OCI-LY7 (cell line): ENCODE measurements at regions of chr7 and their contacts with region 1.

Region 1: GRCh38 chr7:28695300-28696295 is 262.5 kb downstream of the TRIL start:
- DNase-seq: no peak
- H3K4me3 ChIP-seq: no peak overlapping the region
- H3K27ac ChIP-seq: no peak overlapping the region
- H3K4me1 ChIP-seq: no peaks in the 10 kb centered on the region
- CTCF ChIP-seq: no peak

Region 2: DNA sequence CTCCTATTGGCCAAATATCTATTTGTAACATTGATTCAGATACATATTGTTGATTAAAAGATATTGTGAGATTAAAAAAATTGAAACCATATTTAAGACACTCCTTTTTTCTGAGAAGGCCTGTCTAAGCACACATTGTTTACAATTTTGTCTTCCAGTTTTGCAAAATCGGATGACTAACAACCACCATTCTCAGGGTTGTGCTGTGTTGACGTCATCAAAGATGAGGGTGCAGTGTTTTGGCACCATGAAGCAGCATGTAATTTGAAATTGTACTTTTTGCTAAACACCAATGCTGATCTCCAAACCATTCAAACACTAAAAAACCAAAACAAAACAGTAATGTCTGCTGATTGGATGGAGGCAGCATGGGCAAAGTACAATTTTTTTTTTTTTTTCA is 275.9 kb before region 1 on chr7:
- CTCF ChIA-PET with region 1: no interaction called
- POLR2A ChIA-PET with region 1: no interaction called
- intact Hi-C with region 1: no loop called
- DNase-seq: no peak
- H3K4me3 ChIP-seq: no peak overlapping the region
- H3K27ac ChIP-seq: no peak overlapping the region
- H3K4me1 ChIP-seq: no peaks in the 10 kb centered on the region
- CTCF ChIP-seq: no peak

Region 3: DNA sequence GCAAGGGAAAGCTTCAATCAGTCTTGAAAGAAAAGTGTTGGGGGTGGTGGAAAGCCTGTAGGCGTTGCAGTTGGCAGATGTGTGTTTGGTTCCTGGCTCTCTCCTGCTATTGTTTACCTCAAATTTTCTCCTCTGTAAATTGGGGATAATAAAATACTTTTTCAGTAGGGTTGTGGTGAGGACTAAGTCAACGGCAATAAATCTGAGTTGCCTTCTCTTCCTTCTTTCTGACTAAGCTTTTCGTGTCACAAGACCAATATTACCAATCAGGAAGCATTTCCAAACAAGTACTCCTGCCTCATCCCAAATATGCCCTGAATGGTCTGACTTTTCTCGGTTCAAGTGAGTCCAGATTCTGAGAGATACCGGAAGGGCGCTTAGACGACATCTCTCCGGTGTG is 229.3 kb before region 1 on chr7:
- CTCF ChIA-PET with region 1: no interaction called
- POLR2A ChIA-PET with region 1: no interaction called
- intact Hi-C with region 1: no loop called
- DNase-seq: no peak
- H3K4me3 ChIP-seq: no peak overlapping the region
- H3K27ac ChIP-seq: no peak overlapping the region
- H3K4me1 ChIP-seq: no peaks in the 10 kb centered on the region
- CTCF ChIP-seq: no peak

Region 4: GRCh38 chr7:28608731-28609130 is 86.9 kb before region 1 on chr7:
- CTCF ChIA-PET with region 1: no interaction called
- POLR2A ChIA-PET with region 1: no interaction called
- intact Hi-C with region 1: no loop called
- DNase-seq: no peak
- H3K4me3 ChIP-seq: no peak overlapping the region
- H3K27ac ChIP-seq: no peak overlapping the region
- H3K4me1 ChIP-seq: no peaks in the 10 kb centered on the region
- CTCF ChIP-seq: no peak

Region 5: GRCh38 chr7:28684650-28685241 is 10.9 kb before region 1 on chr7:
- CTCF ChIA-PET with region 1: interaction called, 4 read pairs
- POLR2A ChIA-PET with region 1: interaction called, 12 read pairs
- intact Hi-C with region 1: no loop called
- DNase-seq: no peak
- H3K4me3 ChIP-seq: no peak overlapping the region
- H3K27ac ChIP-seq: no peak overlapping the region
- H3K4me1 ChIP-seq: peaks cover 12% of the 10 kb centered on the region
- CTCF ChIP-seq: no peak

Region 6: DNA sequence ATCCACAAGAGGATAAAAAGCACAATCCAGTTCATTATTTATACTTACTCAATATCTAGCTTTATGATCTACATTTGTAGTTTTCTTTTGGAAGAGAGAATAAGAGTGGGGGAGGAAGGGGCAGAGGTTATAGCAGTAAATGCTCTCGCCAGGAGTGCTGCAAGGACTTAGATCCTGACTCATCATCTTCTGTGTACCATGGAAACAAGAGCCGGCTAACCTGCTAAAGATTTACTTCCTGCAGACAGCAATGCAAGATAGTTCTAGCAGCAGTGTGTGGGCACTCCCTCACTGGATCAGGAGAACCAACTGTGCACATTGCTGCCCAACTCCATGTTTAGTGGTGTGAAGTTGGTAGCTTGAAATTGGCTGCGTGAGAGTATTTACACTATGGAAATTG is 310.2 kb after region 1 on chr7:
- CTCF ChIA-PET with region 1: no interaction called
- POLR2A ChIA-PET with region 1: no interaction called
- intact Hi-C with region 1: no loop called
- DNase-seq: no peak
- H3K4me3 ChIP-seq: no peak overlapping the region
- H3K27ac ChIP-seq: no peak overlapping the region
- H3K4me1 ChIP-seq: no peaks in the 10 kb centered on the region
- CTCF ChIP-seq: no peak